ENCODE measurements at regions of chr10 and their contacts with region 1.

Region 1: GRCh38 chr10:47047671-47048525 is 136.7 kb downstream of the PTPN20 start:
- DNase-seq: peak; percentile 87
- H3K4me3 Mint-ChIP-seq: no peak overlapping the region
- H3K27ac Mint-ChIP-seq: no peak overlapping the region
- H3K4me1 Mint-ChIP-seq: peaks cover 20% of the 10 kb centered on the region
- H3K27me3 Mint-ChIP-seq: no peaks in the 10 kb centered on the region

Region 2: GRCh38 chr10:46284293-46285229 is 763.3 kb before region 1 on chr10:
- CTCF ChIA-PET with region 1: no interaction called
- POLR2A ChIA-PET with region 1: no interaction called
- intact Hi-C with region 1: no loop called
- DNase-seq: peak; percentile 88
- H3K4me3 Mint-ChIP-seq: peak overlapping the region; percentile 85
- H3K27ac Mint-ChIP-seq: peak overlapping the region; percentile 39
- H3K4me1 Mint-ChIP-seq: peaks cover 20% of the 10 kb centered on the region
- H3K27me3 Mint-ChIP-seq: peaks cover 1% of the 10 kb centered on the region

Region 3: DNA sequence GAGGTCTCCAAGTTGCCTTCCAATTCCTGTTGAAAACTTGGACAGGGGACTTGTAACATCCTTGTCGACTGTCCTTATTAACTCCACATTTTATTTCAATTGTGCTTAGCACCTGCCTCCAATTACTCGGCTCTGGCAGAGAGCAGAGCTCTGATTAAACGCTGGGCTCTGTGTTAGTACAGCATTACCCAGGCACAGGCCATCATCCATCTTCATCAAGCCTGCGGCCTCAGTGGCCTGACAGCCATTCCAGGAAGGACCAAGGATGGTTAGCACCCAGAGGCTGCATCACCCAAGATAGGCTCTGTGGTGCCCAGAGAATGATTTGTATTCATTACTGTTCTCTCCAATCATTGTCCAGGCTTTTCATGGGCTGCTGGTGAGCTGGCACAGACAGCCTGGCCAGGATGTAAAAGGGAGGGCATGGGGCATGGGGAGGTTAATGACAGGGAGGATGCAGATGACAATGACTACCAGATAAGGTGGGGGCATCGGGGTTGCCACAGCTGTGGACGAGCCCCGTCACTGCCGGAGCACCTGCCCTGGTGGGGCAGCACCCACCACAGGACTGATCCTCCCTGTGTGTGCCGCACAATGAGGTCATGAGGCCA is 13.4 kb before region 1 on chr10:
- CTCF ChIA-PET with region 1: interaction called, 26 read pairs
- POLR2A ChIA-PET with region 1: no interaction called
- intact Hi-C with region 1: no loop called
- DNase-seq: no peak
- H3K4me3 Mint-ChIP-seq: no peak overlapping the region
- H3K27ac Mint-ChIP-seq: no peak overlapping the region
- H3K4me1 Mint-ChIP-seq: no peaks in the 10 kb centered on the region
- H3K27me3 Mint-ChIP-seq: no peaks in the 10 kb centered on the region

Region 4: DNA sequence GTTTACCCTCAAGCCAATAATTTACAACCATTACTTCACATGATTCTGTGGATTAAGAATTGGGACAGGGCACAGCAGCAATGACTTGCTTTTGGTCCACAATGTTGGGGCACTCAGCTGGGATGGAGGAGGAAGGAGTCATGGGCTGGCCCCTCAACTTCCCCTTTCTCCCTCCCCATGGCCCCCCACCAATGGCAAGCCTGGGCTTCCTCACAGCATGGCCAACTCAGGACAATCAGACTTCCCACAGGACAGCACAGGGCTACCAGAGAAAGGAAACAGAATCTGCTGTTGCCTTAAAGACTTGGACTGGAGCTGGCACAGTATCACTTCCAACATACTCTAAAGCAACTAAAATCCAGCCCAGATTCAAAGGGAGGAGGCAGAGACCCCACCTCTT is 24.0 kb after region 1 on chr10:
- CTCF ChIA-PET with region 1: interaction called, 16 read pairs
- POLR2A ChIA-PET with region 1: no interaction called
- intact Hi-C with region 1: no loop called
- DNase-seq: no peak
- H3K4me3 Mint-ChIP-seq: no peak overlapping the region
- H3K27ac Mint-ChIP-seq: no peak overlapping the region
- H3K4me1 Mint-ChIP-seq: peaks cover 3% of the 10 kb centered on the region
- H3K27me3 Mint-ChIP-seq: no peaks in the 10 kb centered on the region

Region 5: GRCh38 chr10:47261121-47261520 is 213.2 kb after region 1 on chr10:
- CTCF ChIA-PET with region 1: interaction called, 12 read pairs
- POLR2A ChIA-PET with region 1: no interaction called
- intact Hi-C with region 1: no loop called
- DNase-seq: peak; percentile 63
- H3K4me3 Mint-ChIP-seq: peak overlapping the region; percentile 36
- H3K27ac Mint-ChIP-seq: peak overlapping the region; percentile 96
- H3K4me1 Mint-ChIP-seq: peaks cover 91% of the 10 kb centered on the region
- H3K27me3 Mint-ChIP-seq: peaks cover 1% of the 10 kb centered on the region

Region 6: GRCh38 chr10:47306387-47307210 is 258.7 kb after region 1 on chr10:
- CTCF ChIA-PET with region 1: interaction called, 369 read pairs
- POLR2A ChIA-PET with region 1: interaction called, 7 read pairs
- intact Hi-C with region 1: no loop called
- DNase-seq: no peak
- H3K4me3 Mint-ChIP-seq: no peak overlapping the region
- H3K27ac Mint-ChIP-seq: no peak overlapping the region
- H3K4me1 Mint-ChIP-seq: peaks cover 16% of the 10 kb centered on the region
- H3K27me3 Mint-ChIP-seq: no peaks in the 10 kb centered on the region

Region 7: GRCh38 chr10:47340608-47341170 is 292.8 kb after region 1 on chr10:
- CTCF ChIA-PET with region 1: interaction called, 39 read pairs
- POLR2A ChIA-PET with region 1: no interaction called
- intact Hi-C with region 1: loop called (anchors 1 kb)
- DNase-seq: peak; percentile 79
- H3K4me3 Mint-ChIP-seq: no peak overlapping the region
- H3K27ac Mint-ChIP-seq: no peak overlapping the region
- H3K4me1 Mint-ChIP-seq: no peaks in the 10 kb centered on the region
- H3K27me3 Mint-ChIP-seq: peaks cover 5% of the 10 kb centered on the region

Region 8: DNA sequence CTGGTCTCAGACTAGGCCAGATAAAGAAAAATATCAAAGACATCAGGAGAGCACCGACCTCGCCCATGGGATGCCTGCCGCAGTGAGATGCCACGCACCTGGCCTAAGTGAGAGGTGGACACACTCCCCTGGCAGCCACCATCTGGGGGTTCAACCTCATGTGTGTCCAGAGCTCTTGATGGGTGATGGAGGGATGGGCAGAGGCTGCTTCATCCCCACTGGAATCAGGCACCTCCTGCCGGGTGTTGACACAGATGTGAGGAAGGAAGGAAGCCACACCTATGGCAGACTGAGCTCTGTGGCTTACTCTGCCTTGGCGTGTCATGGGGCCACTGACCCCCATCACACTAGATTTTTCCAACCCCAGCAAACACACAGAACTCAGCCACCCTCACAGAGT is 324.8 kb after region 1 on chr10:
- CTCF ChIA-PET with region 1: no interaction called
- POLR2A ChIA-PET with region 1: no interaction called
- intact Hi-C with region 1: no loop called
- DNase-seq: peak; percentile 4
- H3K4me3 Mint-ChIP-seq: no peak overlapping the region
- H3K27ac Mint-ChIP-seq: no peak overlapping the region
- H3K4me1 Mint-ChIP-seq: peaks cover 9% of the 10 kb centered on the region
- H3K27me3 Mint-ChIP-seq: peaks cover 19% of the 10 kb centered on the region